ENCODE measurements at regions of chr19 and their contacts with region 1.

Region 1: DNA sequence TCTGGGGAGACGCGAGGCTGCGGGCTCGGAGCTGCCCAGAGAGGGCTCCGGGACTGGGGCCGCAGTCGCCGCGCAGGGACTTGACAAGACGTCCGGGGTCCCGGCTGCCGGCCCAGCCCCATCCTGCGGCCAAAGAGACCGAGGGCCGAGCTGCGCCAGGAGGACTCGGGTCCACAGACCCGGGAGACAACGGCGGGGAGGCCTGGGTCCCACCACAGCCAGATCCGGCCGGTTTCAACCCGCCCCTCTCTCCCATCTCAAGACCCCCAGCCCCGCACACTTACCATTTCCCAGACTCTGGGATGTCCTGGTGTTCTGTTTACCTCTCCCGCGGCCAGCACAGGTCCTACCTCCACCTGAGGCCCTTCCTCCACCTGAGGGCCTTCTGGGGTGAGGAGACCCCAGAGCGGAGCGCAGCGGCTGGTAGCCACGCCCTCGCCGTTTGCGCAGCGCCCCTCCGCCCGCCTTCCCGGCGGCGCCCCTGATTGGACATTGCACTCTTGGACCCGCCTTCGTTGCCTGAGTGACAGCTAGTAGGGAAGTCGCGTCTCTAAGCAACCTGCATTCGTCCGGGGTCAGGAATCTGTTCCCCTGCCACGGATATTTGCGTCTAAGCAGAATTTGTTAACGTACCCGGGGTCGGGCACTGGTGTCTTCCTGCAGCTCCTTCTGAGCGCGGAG is at the start of gene ZNF709:
- DNase-seq: peak; percentile 78 to 93 (median 90)
- ATAC-seq: peak; percentile 98
- H3K4me3 ChIP-seq: peak within 1 kb of the TSS; percentile 92 to 93
- H3K4me3 Mint-ChIP-seq: peak within 1 kb of the TSS; percentile 94
- H3K27ac ChIP-seq: peak within 1 kb of the TSS; percentile 73 to 76
- H3K27ac Mint-ChIP-seq: peak within 1 kb of the TSS; percentile 94
- H3K4me1 ChIP-seq: peaks cover 23% of the 10 kb centered on the region
- H3K4me1 Mint-ChIP-seq: peaks cover 31% of the 10 kb centered on the region
- H3K27me3 ChIP-seq: no peaks in the 10 kb centered on the region
- H3K27me3 Mint-ChIP-seq: no peaks in the 10 kb centered on the region
- CTCF ChIP-seq: no peak
- total RNA-seq, gene ZNF709: 4.3 to 4.5 TPM

Region 2: GRCh38 chr19:12162882-12163806 is 321.4 kb before region 1 on chr19 and contains the start of gene ZNF136:
- CTCF ChIA-PET with region 1: no interaction called
- POLR2A ChIA-PET with region 1: no interaction called
- intact Hi-C with region 1: loop called in 1 of 2 experiments (anchors 5 kb)
- DNase-seq: peak; percentile 84 to 97 (median 91)
- ATAC-seq: peak; percentile 99
- H3K4me3 ChIP-seq: peak within 1 kb of the TSS; percentile 83 to 86
- H3K4me3 Mint-ChIP-seq: peak within 1 kb of the TSS; percentile 96
- H3K27ac ChIP-seq: peak within 1 kb of the TSS; percentile 93 to 96
- H3K27ac Mint-ChIP-seq: peak within 1 kb of the TSS; percentile 98
- H3K4me1 ChIP-seq: peaks cover 25% of the 10 kb centered on the region
- H3K4me1 Mint-ChIP-seq: peaks cover 46% of the 10 kb centered on the region
- H3K27me3 ChIP-seq: no peaks in the 10 kb centered on the region
- H3K27me3 Mint-ChIP-seq: no peaks in the 10 kb centered on the region
- CTCF ChIP-seq: no peak
- total RNA-seq, gene ZNF136: 41.7 to 42.1 TPM

Region 3: GRCh38 chr19:12365236-12366162 is 119.0 kb before region 1 on chr19 and contains the start of gene ZNF442:
- CTCF ChIA-PET with region 1: no interaction called
- POLR2A ChIA-PET with region 1: interaction called, 3 read pairs
- intact Hi-C with region 1: loop called in 1 of 2 experiments (anchors 10 kb)
- DNase-seq: peak; percentile 54 to 91 (median 85)
- ATAC-seq: peak; percentile 98
- H3K4me3 ChIP-seq: peak within 1 kb of the TSS; percentile 64 to 65
- H3K4me3 Mint-ChIP-seq: peak within 1 kb of the TSS; percentile 97
- H3K27ac ChIP-seq: peak within 1 kb of the TSS in 1 of 2 experiments; percentile 34
- H3K27ac Mint-ChIP-seq: peak within 1 kb of the TSS; percentile 84
- H3K4me1 ChIP-seq: peaks cover 13% of the 10 kb centered on the region
- H3K4me1 Mint-ChIP-seq: peaks cover 24% of the 10 kb centered on the region
- H3K27me3 ChIP-seq: peaks cover 0 to 2% of the 10 kb centered on the region in 2 experiments
- H3K27me3 Mint-ChIP-seq: no peaks in the 10 kb centered on the region
- CTCF ChIP-seq: no peak
- total RNA-seq, gene ZNF442: 1.00 to 1.0 TPM

Region 4: DNA sequence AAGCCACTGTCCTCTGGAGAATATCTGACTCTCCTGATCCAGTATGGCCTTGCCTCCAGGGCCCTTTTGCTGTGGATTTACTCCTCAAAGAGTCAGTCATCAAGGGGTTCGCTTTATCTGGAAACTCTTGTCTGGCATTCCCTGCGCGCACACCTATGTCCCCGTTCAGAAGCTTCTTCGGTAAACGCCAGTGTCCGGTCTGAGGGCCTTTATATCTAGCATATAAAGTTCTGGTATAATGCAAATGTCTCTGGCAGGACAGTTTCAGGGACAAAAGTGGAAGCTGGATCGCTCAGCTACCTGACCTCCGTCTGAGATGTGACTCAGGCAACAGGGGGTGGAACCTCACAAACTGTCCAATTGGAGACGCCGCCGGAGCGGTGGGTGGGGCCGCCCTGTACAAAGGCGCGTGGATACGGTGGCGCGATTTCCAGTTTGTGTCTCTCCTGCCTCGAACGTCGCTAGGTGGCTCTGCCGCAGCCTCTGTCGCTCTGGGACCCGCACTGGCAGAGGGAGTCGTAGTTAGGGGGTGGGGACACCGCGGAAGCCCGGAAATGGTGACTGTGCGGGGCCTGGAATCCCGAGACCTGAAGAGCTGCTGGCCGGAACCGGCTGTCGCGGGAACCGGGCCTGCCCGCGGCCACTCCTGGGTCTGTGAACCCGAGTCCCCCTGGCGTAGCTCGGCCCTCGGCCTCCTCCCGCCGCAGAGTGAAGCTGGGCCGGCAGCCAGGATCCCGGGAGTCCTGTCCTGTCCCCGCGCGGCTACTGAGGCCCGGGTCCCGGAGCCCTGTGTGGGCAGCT is 10.7 kb after region 1 on chr19:
- CTCF ChIA-PET with region 1: interaction called, 4 read pairs
- POLR2A ChIA-PET with region 1: interaction called, 11 read pairs
- intact Hi-C with region 1: loop called (anchors 1 kb)
- DNase-seq: peak; percentile 81 to 96 (median 93)
- ATAC-seq: peak; percentile 99
- H3K4me3 ChIP-seq: peak overlapping the region; percentile 53 to 64
- H3K4me3 Mint-ChIP-seq: peak overlapping the region; percentile 91
- H3K27ac ChIP-seq: peak overlapping the region; percentile 68 to 79
- H3K27ac Mint-ChIP-seq: peak overlapping the region; percentile 94
- H3K4me1 ChIP-seq: peaks cover 8% of the 10 kb centered on the region
- H3K4me1 Mint-ChIP-seq: peaks cover 18% of the 10 kb centered on the region
- H3K27me3 ChIP-seq: no peaks in the 10 kb centered on the region
- H3K27me3 Mint-ChIP-seq: no peaks in the 10 kb centered on the region
- CTCF ChIP-seq: peak; percentile 55